K562 (cell line): ENCODE measurements at regions of chr15 and their contacts with region 1.

Region 1: DNA sequence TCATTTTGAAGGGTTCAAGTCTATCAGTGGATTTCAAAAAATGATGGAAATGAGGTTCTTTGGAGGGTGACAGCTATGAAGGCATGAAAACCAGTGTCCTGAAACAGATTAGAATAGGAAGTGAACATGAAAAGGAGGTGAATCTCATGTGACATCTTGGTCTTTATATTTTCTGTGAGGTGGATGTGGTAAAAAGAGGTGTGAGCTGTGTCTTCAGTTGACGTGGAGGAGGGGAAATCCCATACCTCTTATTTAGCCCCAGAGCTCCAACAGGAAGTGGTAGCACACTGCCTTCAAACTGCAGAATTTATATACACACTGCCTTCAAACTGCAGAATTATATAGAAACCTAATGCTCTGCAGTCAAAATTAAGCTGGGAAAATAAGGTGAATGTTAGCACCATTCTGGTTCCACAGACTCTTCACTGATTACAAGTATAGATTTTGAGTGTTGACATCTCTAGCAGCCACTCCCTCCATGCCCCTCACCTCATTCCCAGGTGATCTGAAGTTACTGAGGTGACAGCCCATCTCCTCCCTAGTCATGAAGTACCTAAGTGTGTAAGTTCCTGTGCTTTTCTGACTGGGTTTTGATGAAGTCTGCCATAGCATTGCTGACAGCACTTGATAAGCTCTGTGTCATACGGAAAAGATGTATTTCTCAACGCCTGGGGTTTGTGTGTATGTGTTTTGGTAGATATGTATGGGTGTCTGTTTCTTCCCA is 2.7 kb downstream of the RAB8B start:
- DNase-seq: peak in 2 of 4 experiments; percentile 47 to 80
- ATAC-seq: peak; percentile 23
- H3K4me3 ChIP-seq: no peak overlapping the region
- H3K27ac ChIP-seq: peak overlapping the region; percentile 80
- H3K4me1 ChIP-seq: peaks cover 14 to 61% of the 10 kb centered on the region in 2 experiments
- H3K27me3 ChIP-seq: no peaks in the 10 kb centered on the region
- CTCF ChIP-seq: no peak
- EP300 ChIP-seq: peak; percentile 71; the same call in 1 of the 2 replicates
- POLR2A ChIP-seq: no peak
- RAD21 ChIP-seq: no peak; a peak in 1 of 4 replicates

Region 2: DNA sequence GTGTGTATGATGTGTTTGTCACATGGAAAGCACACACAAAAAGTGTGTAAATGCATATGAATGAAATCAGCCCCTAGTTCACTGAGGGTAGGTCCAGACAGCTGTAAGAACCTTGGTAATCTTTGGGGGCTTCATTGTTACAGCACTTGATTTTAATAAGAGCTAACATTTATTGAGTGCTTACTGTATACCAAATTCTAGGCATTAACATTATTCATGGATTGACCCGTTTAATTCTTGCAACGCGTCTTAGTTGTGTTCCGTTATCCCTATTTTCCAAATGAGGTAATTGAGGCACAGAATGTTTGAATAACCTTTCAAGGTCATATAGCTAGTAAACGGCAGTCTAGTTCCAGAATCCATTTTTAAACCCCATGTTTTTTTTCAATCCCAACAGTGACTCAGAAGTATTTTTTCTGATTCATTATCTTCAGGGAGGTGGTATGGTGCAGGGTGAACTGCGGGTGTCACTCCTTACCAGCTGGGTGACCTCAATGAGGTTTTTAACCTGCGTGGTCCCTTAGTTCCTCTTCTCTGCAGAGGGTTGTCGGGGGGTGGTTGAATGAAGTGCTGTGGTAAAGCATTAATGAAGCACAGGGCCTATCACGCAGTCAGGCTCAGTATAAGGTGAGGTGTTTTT is 11.5 kb after region 1 on chr15:
- CTCF ChIA-PET with region 1: no interaction called
- POLR2A ChIA-PET with region 1: interaction called, 36 read pairs
- in situ Hi-C with region 1: no loop called
- intact Hi-C with region 1: no loop called
- DNase-seq: peak in 3 of 4 experiments; percentile 63 to 70 (median 66)
- ATAC-seq: peak; percentile 36
- H3K4me3 ChIP-seq: no peak overlapping the region
- H3K27ac ChIP-seq: peak overlapping the region; percentile 60; the same call in 2 of the 3 replicates
- H3K4me1 ChIP-seq: peaks cover 21 to 59% of the 10 kb centered on the region in 2 experiments
- H3K27me3 ChIP-seq: no peaks in the 10 kb centered on the region
- CTCF ChIP-seq: peak in 1 of 3 experiments; percentile 33; a peak in 2 of 6 replicates
- EP300 ChIP-seq: no peak
- POLR2A ChIP-seq: no peak
- RAD21 ChIP-seq: peak in 1 of 2 experiments; percentile 30; a peak in 2 of 4 replicates

Region 3: GRCh38 chr15:63277038-63277892 is 85.2 kb after region 1 on chr15 and contains the start of gene APH1B:
- CTCF ChIA-PET with region 1: no interaction called
- POLR2A ChIA-PET with region 1: interaction called, 4 read pairs
- in situ Hi-C with region 1: no loop called
- intact Hi-C with region 1: loop called (anchors 5 kb)
- DNase-seq: peak; percentile 89 to 96 (median 94)
- ATAC-seq: peak; percentile 93
- H3K4me3 ChIP-seq: peak within 1 kb of the TSS; percentile 65
- H3K27ac ChIP-seq: peak within 1 kb of the TSS; percentile 82
- H3K4me1 ChIP-seq: peaks cover 12 to 18% of the 10 kb centered on the region in 2 experiments; a peak in 4 of 5 replicates
- H3K27me3 ChIP-seq: no peaks in the 10 kb centered on the region
- CTCF ChIP-seq: 0 out of 6 replicates have a peak, but pooled peaks of 2 of the 3 experiments have one; percentile 2 to 14
- EP300 ChIP-seq: no peak
- POLR2A ChIP-seq: peak; percentile 87; the same call in 1 of the 2 replicates
- RAD21 ChIP-seq: 0 out of 4 replicates have a peak, but pooled peaks of 1 of the 2 experiments have one; percentile 19
- polyA plus RNA-seq, gene APH1B: 7.0 to 8.7 TPM

Region 4: DNA sequence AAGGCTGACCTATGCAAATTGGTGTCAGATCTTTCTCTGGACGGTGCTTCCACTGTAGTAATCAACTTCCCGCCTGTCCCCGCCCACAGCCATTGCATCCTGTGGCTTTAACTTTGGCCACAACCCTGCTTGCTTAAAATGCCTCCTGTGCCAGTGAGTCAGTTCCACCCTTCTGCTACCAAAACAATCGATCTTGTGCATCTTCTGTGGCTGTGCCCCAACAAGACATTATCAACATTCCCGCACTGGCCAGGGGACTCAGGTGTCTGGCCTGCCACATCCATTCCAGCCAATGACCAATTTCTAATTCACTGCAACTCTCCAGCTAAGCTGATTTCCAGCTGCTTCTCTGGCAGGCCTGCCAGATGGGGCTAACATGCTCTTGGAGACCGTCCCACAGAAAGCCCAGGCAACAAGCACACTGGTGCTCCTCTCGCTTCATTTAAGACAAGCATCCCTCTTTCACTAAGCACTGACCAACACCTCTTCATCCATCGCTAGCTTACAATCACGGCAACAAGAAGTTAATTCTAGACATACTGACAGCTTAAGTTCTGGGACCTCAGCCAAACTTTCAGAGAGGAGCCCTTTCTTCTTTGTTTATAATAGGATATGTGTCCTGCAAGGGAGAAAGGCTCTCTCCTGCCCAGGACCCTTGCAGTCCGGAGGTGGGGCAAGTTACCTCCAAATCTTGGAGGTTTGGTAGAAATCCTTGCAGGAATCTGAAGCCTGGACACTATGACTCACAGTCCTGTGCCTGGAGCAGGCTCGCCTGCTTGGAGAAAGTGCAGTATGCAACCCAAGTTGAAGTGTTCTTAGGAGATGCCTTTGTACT is 182.8 kb after region 1 on chr15:
- CTCF ChIA-PET with region 1: no interaction called
- POLR2A ChIA-PET with region 1: no interaction called
- in situ Hi-C with region 1: no loop called
- intact Hi-C with region 1: no loop called
- DNase-seq: no peak
- ATAC-seq: no peak; the same call in 2 of the 3 replicates
- H3K4me3 ChIP-seq: no peak overlapping the region
- H3K27ac ChIP-seq: no peak overlapping the region
- H3K4me1 ChIP-seq: peaks cover 29 to 38% of the 10 kb centered on the region in 2 experiments
- H3K27me3 ChIP-seq: no peaks in the 10 kb centered on the region
- CTCF ChIP-seq: no peak
- EP300 ChIP-seq: no peak
- POLR2A ChIP-seq: no peak
- RAD21 ChIP-seq: no peak